ENCODE measurements at regions of chr5 and their contacts with region 1.

Region 1: GRCh38 chr5:126422989-126423788 is at the start of gene GRAMD2B:
- DNase-seq: peak; percentile 55 to 78 (median 74)
- H3K4me3 ChIP-seq: peak within 1 kb of the TSS; percentile 85
- H3K4me3 Mint-ChIP-seq: peak within 1 kb of the TSS; percentile 90 to 99 (median 92)
- H3K27ac ChIP-seq: peak within 1 kb of the TSS; percentile 81
- H3K27ac Mint-ChIP-seq: peak within 1 kb of the TSS; percentile 92 to 98 (median 94)
- H3K4me1 ChIP-seq: peaks cover 14% of the 10 kb centered on the region
- H3K4me1 Mint-ChIP-seq: peaks cover 30 to 41% (median 32%) of the 10 kb centered on the region in 3 donors
- H3K27me3 ChIP-seq: no peaks in the 10 kb centered on the region
- H3K27me3 Mint-ChIP-seq: no peaks in the 10 kb centered on the region
- total RNA-seq, gene GRAMD2B: 8.4 to 10.4 TPM

Region 2: GRCh38 chr5:126309860-126310259 is 113.3 kb before region 1 on chr5:
- CTCF ChIA-PET with region 1: no interaction called
- POLR2A ChIA-PET with region 1: no interaction called
- DNase-seq: no peak
- H3K4me3 ChIP-seq: no peak overlapping the region
- H3K4me3 Mint-ChIP-seq: no peak overlapping the region
- H3K27ac ChIP-seq: no peak overlapping the region
- H3K27ac Mint-ChIP-seq: no peak overlapping the region
- H3K4me1 ChIP-seq: no peaks in the 10 kb centered on the region
- H3K4me1 Mint-ChIP-seq: no peaks in the 10 kb centered on the region
- H3K27me3 ChIP-seq: no peaks in the 10 kb centered on the region
- H3K27me3 Mint-ChIP-seq: peaks cover 4 to 31% of the 10 kb centered on the region in 2 donors

Region 3: GRCh38 chr5:126449751-126450271 is 26.6 kb after region 1 on chr5:
- CTCF ChIA-PET with region 1: interaction called, 5 read pairs
- POLR2A ChIA-PET with region 1: interaction called, 14 read pairs
- DNase-seq: peak; percentile 13 to 69 (median 58)
- H3K4me3 ChIP-seq: peak overlapping the region; percentile 53
- H3K4me3 Mint-ChIP-seq: peak overlapping the region; percentile 82 to 91 (median 88)
- H3K27ac ChIP-seq: peak overlapping the region; percentile 81
- H3K27ac Mint-ChIP-seq: peak overlapping the region; percentile 86 to 99 (median 97)
- H3K4me1 ChIP-seq: peaks cover 72% of the 10 kb centered on the region
- H3K4me1 Mint-ChIP-seq: peaks cover 51 to 70% (median 58%) of the 10 kb centered on the region in 3 donors
- H3K27me3 ChIP-seq: no peaks in the 10 kb centered on the region
- H3K27me3 Mint-ChIP-seq: no peaks in the 10 kb centered on the region

Measured in CD8-positive, alpha-beta memory T cell (primary cell).